BJ (cell line): ENCODE measurements at regions of chr22 and their contacts with region 1.

Region 1: GRCh38 chr22:40922484-40923303 is 28.5 kb upstream of the RBX1 start:
- DNase-seq: peak; percentile 16
- H3K4me3 ChIP-seq: no peak overlapping the region
- H3K27me3 ChIP-seq: no peaks in the 10 kb centered on the region
- CTCF ChIP-seq: peak; percentile 54

Region 2: GRCh38 chr22:40856513-40857308 is 66.0 kb before region 1 on chr22 and contains the starts of genes ST13 and XPNPEP3:
- CTCF ChIA-PET with region 1: no interaction called
- POLR2A ChIA-PET with region 1: no interaction called
- DNase-seq: peak; percentile 81
- H3K4me3 ChIP-seq: peak within 1 kb of the TSS; percentile 99
- H3K27me3 ChIP-seq: no peaks in the 10 kb centered on the region
- CTCF ChIP-seq: 0 out of 2 replicates have a peak, but pooled peaks have one; percentile 20
- polyA plus RNA-seq, gene ST13: 90.7 and 145 TPM in 2 replicates
- polyA plus RNA-seq, gene XPNPEP3: 21.9 and 25.8 TPM in 2 replicates

Region 3: GRCh38 chr22:40911772-40912171 is 10.9 kb before region 1 on chr22:
- CTCF ChIA-PET with region 1: interaction called, 16 read pairs
- POLR2A ChIA-PET with region 1: no interaction called
- DNase-seq: no peak
- H3K4me3 ChIP-seq: no peak overlapping the region
- H3K27me3 ChIP-seq: no peaks in the 10 kb centered on the region
- CTCF ChIP-seq: no peak

Region 4: DNA sequence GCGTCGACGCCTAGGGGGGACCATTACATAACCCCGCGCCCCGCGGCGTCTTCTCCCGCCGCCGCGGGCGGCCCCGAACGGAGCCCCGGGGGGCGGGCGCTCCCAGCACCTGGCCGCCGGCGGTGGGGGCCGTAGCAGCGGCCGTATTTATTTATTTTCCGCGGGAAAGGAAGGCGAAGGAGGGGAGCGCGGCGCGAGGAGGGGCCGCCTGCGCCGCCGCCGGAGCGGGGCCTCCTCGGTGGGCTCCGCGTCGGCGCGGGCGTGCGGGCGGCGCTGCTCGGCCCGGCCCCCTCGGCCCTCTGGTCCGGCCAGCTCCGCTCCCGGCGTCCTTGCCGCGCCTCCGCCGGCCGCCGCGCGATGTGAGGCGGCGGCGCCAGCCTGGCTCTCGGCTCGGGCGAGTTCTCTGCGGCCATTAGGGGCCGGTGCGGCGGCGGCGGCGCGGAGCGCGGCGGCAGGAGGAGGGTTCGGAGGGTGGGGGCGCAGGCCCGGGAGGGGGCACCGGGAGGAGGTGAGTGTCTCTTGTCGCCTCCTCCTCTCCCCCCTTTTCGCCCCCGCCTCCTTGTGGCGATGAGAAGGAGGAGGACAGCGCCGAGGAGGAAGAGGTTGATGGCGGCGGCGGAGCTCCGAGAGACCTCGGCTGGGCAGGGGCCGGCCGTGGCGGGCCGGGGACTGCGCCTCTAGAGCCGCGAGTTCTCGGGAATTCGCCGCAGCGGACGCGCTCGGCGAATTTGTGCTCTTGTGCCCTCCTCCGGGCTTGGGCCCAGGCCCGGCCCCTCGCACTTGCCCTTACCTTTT is 169.5 kb after region 1 on chr22 and contains the start of gene EP300:
- CTCF ChIA-PET with region 1: interaction called, 13 read pairs
- POLR2A ChIA-PET with region 1: no interaction called
- DNase-seq: peak; percentile 31
- H3K4me3 ChIP-seq: peak within 1 kb of the TSS; percentile 97
- H3K27me3 ChIP-seq: no peaks in the 10 kb centered on the region
- CTCF ChIP-seq: peak; percentile 47
- polyA plus RNA-seq, gene EP300: 11.2 and 13.0 TPM in 2 replicates

Region 5: DNA sequence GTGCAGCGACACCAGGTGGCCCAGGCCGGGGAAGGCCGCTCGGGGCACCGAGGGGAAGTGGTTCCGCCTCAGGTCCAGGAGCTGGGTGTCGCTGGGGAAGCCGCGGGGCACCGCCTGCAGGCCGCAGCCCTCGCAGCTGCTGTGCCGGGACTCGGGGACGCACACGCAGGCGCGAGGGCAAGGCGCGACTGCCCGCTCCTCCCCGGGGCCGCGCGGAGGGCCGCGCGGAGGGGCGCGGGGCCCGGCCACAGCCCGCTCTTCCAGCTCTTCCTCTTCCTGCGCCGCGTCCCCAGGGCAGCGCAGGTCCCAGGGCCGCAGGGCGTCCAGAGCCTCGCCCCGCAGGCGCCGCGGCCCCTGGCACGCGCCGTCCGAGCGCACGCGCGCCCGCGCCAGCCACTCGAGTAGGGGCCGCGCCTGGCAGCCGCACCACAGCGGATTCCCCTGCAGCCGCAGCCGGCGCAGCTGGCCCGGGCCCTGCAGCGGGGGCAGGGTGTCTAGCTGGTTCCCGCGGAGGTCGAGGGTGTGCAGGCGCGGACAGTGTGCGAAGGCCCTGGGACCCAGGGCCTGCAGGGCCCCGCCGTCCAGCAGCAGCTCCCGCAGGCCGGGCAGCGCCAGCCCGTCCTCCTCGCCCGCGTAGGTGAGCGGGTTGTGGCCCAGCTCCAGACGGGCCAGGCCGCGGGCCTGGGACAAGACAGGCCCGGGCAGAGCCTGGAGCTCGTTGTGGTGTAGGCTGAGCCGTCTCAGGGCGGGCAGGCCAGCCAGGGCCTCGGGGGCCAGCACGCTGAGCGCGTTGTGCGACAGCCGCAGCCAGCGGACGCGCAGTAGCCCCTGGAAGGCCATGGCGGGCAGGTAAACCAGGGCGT is 315.2 kb after region 1 on chr22:
- CTCF ChIA-PET with region 1: interaction called, 14 read pairs
- POLR2A ChIA-PET with region 1: no interaction called
- DNase-seq: no peak
- H3K4me3 ChIP-seq: peak overlapping the region; percentile 14; the same call in 1 of the 2 replicates
- H3K27me3 ChIP-seq: no peaks in the 10 kb centered on the region
- CTCF ChIP-seq: peak; percentile 33